Calu3 (cell line): ENCODE measurements at regions of chr7 and their contacts with region 1.

Region 1: GRCh38 chr7:83976295-83976694 is 218.3 kb downstream of the SEMA3A start:
- DNase-seq: peak; percentile 1
- H3K4me3 Mint-ChIP-seq: no peak overlapping the region
- H3K27ac Mint-ChIP-seq: no peak overlapping the region
- H3K4me1 Mint-ChIP-seq: no peaks in the 10 kb centered on the region
- H3K27me3 Mint-ChIP-seq: no peaks in the 10 kb centered on the region
- CTCF ChIP-seq: peak; percentile 41

Region 2: GRCh38 chr7:84188786-84189405 is 212.6 kb after region 1 on chr7:
- CTCF ChIA-PET with region 1: no interaction called
- intact Hi-C with region 1: loop called (anchors 2 kb)
- DNase-seq: no peak
- H3K4me3 Mint-ChIP-seq: no peak overlapping the region
- H3K27ac Mint-ChIP-seq: no peak overlapping the region
- H3K4me1 Mint-ChIP-seq: peaks cover 11% of the 10 kb centered on the region
- H3K27me3 Mint-ChIP-seq: no peaks in the 10 kb centered on the region
- CTCF ChIP-seq: no peak

Region 3: DNA sequence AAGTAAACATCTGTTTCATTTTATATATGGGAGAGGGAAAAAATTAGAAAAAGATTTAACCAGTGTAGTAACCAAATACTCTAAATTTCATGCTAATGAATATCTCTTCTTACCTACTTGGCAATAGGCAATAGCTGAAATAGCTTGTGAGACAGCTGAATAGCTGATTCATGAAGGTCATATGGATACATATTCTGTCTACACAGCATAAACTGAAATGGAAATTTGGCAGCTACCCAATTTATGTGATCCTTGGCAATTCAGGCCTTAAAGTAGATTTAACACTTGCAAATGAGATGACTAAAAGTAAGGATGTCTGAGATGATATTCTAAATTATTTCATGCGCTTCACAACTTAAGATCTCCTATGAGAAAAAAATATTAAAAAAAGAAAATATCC is 479.5 kb after region 1 on chr7:
- CTCF ChIA-PET with region 1: no interaction called
- intact Hi-C with region 1: loop called (anchors 1 kb)
- DNase-seq: no peak
- H3K4me3 Mint-ChIP-seq: no peak overlapping the region
- H3K27ac Mint-ChIP-seq: no peak overlapping the region
- H3K4me1 Mint-ChIP-seq: no peaks in the 10 kb centered on the region
- H3K27me3 Mint-ChIP-seq: no peaks in the 10 kb centered on the region
- CTCF ChIP-seq: no peak

Region 4: GRCh38 chr7:84624527-84624926 is 648.2 kb after region 1 on chr7:
- CTCF ChIA-PET with region 1: no interaction called
- intact Hi-C with region 1: loop called (anchors 10 kb)
- DNase-seq: no peak
- H3K4me3 Mint-ChIP-seq: no peak overlapping the region
- H3K27ac Mint-ChIP-seq: no peak overlapping the region
- H3K4me1 Mint-ChIP-seq: no peaks in the 10 kb centered on the region
- H3K27me3 Mint-ChIP-seq: no peaks in the 10 kb centered on the region
- CTCF ChIP-seq: no peak